Spleen (tissue), 13 donors: ENCODE measurements at regions of chr10 and their contacts with region 1.

Region 1: DNA sequence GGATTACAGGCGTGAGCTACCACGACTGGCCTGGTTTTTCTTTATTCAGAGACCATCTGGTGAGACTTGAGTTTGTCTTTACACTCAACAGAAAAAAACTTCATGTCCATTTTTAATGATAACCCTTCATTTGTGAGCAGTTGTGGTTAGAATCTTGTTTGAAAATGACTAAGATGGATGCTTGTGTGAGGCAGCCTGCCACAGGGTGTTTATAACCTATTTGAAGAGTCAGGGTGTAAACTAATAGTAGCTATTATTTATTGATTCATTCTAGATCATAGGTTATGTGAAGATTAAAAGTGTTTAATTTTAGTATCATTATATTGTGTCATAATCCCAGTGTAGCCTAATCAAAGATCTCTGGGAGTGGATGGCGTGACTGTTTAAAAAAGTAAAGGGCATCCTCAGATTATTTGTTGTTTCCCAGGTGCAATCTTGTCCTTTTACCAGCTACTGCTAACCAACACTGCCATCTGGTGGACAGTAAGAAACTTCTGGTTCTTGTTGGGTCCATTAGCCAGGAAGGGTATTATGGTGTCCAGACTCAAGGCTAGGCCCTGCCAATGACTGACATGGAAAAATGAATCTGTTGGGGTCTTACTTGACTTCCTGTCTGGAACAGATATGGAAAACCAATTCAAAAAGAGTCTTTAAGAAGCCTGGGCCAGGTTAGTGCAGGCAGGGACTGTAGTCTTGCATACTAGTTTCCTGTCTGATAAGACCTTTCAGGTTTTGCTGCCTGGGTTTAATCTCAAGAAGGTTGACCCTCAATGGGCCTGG is 24.9 kb downstream of the NRBF2 start:
- DNase-seq: no peak
- H3K4me3 ChIP-seq: no peak overlapping the region
- H3K27ac ChIP-seq: peak overlapping the region in 1 of 8 donors; percentile 4
- H3K4me1 ChIP-seq: peaks cover 0 to 33% (median 14%) of the 10 kb centered on the region in 6 donors
- H3K27me3 ChIP-seq: no peaks in the 10 kb centered on the region
- CTCF ChIP-seq: peak; percentile 61 to 84 (median 78)
- POLR2A ChIP-seq: no peak

Region 2: DNA sequence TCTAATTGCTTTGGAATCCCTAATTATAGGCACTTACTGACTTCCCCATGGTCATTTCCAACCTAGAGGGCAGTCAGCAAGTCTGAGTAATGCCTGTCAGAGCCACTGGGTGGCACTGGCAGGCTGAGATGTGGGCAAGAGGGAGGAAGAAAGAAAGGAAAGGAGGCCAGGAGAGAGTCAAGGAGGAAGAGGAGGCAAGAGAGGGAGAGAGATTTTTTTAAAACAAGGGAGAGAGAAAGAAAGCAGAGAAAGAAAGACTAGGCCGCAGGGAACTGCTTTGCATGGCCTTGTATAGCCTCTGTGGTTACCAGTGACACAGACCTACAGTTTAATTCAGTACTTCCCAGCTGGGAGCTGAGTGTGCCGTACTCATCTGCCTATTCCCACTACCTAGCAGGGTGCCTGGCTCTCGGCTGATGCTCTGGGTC is 563.9 kb before region 1 on chr10:
- intact Hi-C with region 1: loop called (anchors 5 kb)
- DNase-seq: peak; percentile 81
- H3K4me3 ChIP-seq: no peak overlapping the region
- H3K27ac ChIP-seq: no peak overlapping the region
- H3K4me1 ChIP-seq: peaks cover 0 to 11% (median 3%) of the 10 kb centered on the region in 6 donors
- H3K27me3 ChIP-seq: no peaks in the 10 kb centered on the region
- CTCF ChIP-seq: peak; percentile 80 to 97 (median 87)
- POLR2A ChIP-seq: no peak

Region 3: DNA sequence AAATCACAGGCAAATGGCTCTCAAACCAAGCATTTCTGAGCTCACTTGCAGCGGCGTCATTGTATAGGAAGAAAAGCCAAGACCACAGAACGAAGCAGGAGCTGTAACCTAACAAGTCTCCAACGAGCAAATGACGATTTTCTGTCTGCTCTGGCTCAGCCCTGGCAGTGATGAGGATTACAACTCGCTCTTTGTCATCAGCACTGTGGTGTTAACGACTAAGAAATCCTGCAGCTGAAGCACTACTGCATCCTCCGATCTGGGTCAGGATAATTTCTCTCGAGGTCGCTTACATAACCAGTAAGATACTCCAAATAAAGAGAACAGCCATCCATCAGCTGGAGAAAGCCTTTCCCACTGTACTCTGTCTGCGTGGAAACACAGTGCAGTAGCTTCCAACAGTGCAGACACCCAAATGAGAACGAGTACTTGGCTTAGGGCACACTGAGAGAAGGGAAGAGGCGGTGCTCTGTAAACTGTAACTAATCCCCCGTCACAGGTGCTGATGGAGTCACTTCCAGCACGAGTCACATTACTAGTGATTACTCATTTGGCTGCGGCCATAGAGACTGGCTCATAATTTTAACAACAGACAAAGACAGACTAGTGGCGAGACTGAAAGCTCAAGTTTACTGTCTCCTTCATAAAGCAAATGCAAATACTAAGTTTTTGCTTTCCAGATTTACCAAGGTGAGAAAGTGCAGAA is 110.9 kb after region 1 on chr10:
- intact Hi-C with region 1: no loop called
- DNase-seq: peak; percentile 87
- H3K4me3 ChIP-seq: peak overlapping the region; percentile 41 to 73 (median 51)
- H3K27ac ChIP-seq: peak overlapping the region; percentile 93 to 98 (median 97)
- H3K4me1 ChIP-seq: peaks cover 21 to 62% (median 36%) of the 10 kb centered on the region in 6 donors
- H3K27me3 ChIP-seq: no peaks in the 10 kb centered on the region
- CTCF ChIP-seq: peak; percentile 10 to 77 (median 53)
- POLR2A ChIP-seq: peak; percentile 96 to 99 (median 96)

Region 4: DNA sequence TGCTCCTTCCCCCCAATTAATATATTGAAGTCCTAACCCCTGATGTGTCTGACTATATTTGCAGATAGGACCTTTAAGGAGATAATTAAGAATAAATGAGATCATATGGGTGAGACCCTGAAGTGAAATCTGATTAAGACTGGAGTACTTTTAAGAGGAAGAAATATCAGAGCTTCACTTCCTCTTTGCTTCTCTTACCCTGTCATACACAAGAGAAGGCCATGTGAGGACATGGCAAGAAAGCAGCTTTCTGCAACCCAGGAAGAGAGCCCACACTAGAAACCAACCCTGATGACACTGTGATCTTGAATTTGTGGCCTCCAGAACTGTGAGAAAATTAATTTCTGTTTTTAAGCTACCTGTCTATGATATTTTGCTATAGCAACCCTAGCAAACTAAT is 263.6 kb after region 1 on chr10:
- intact Hi-C with region 1: no loop called
- DNase-seq: no peak
- H3K4me3 ChIP-seq: no peak overlapping the region
- H3K27ac ChIP-seq: peak overlapping the region in 6 of 8 donors; percentile 38 to 57 (median 50)
- H3K4me1 ChIP-seq: peaks cover 11 to 58% (median 24%) of the 10 kb centered on the region in 6 donors
- H3K27me3 ChIP-seq: no peaks in the 10 kb centered on the region
- CTCF ChIP-seq: no peak
- POLR2A ChIP-seq: no peak

Region 5: DNA sequence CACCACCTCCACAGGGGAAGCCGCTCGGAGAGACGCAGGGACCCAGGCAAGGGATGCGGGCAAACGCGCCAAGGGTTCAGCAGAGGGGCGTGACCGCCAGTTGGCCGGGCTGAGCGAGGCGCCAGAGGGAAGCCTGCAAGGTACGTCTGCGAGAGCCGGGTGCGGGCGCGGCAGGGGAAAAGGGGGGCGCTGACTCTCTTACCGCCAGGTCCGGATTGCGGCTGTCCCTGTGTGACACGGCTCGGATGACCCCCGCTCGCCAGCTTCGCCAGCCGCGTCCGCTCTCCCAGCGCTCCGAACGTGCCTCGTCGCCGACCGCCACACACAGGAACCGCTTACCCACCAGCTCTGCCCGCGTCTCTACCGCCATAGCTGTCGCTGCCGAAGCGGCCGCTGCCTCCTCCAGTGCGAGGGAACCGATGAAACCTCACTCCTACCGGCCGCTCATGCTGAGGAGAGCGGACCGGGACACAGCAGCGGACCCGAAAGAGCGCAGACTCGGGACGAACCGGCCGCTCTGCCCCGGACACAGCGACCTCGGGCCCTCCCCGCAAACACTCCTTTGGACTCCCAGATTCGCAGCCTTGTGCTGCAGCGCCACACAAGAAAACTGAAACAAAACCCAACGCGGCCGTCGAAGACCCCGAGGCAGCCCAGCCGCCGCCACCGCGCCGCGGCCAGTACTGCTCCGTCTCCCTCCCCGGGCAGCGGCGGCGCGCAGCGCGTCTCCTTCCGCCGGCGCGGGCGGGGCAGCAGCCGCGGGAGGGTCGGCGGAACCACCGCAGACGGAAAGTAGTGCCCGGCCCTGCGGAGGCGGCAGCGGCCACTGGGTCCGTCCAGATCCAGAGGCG is 307.5 kb after region 1 on chr10 and contains the start of gene JMJD1C:
- intact Hi-C with region 1: no loop called
- DNase-seq: peak; percentile 95
- H3K4me3 ChIP-seq: peak within 1 kb of the TSS; percentile 70 to 93 (median 85)
- H3K27ac ChIP-seq: peak within 1 kb of the TSS; percentile 87 to 93 (median 91)
- H3K4me1 ChIP-seq: peaks cover 18 to 40% (median 20%) of the 10 kb centered on the region in 6 donors
- H3K27me3 ChIP-seq: no peaks in the 10 kb centered on the region
- CTCF ChIP-seq: no peak
- POLR2A ChIP-seq: peak; percentile 18 to 71 (median 48)
- total RNA-seq, gene JMJD1C: 125 to 272 (median 162) TPM

Region 6: GRCh38 chr10:64148607-64149006 is 990.6 kb after region 1 on chr10:
- intact Hi-C with region 1: no loop called
- DNase-seq: no peak
- H3K4me3 ChIP-seq: no peak overlapping the region
- H3K27ac ChIP-seq: no peak overlapping the region
- H3K4me1 ChIP-seq: no peaks in the 10 kb centered on the region
- H3K27me3 ChIP-seq: no peaks in the 10 kb centered on the region
- CTCF ChIP-seq: no peak
- POLR2A ChIP-seq: no peak